HEK293 (cell line): ENCODE measurements at regions of chr20 and their contacts with region 1.

Region 1: DNA sequence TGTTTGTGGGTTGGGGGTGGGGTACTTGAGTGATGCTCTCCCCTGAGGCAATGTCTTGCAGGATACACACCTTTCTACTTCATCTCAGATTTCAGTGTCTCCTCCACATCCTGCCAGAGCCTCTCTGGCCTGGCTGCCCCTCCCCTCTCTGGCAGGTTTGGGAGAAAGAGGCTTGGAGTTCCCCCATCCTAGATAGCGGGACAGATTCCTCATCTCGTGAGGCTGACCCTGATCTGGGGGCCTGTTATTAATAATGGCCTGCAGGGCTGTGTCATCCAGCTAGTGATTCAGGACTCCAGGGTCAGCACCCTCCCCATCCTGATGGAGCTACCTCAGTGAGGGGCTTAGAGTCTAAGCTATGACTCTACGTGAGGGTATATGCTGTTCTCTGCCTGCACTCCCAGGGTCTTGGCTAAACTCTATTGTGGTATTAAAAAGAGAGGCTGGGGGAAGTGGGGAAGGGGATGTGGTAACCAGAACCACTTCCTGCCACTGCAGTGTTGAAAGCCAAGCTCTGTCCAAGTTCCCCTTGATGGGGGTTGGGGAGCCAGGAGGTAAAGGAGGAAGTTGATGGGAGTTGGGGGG is 3.7 kb upstream of the MMP9 start:
- H3K4me3 ChIP-seq: no peak overlapping the region
- H3K27ac ChIP-seq: no peak overlapping the region
- H3K4me1 ChIP-seq: no peaks in the 10 kb centered on the region
- CTCF ChIP-seq: no peak

Region 2: GRCh38 chr20:45987108-45987780 is 17.7 kb before region 1 on chr20:
- CTCF ChIA-PET with region 1: interaction called, 12 read pairs
- POLR2A ChIA-PET with region 1: interaction called, 7 read pairs
- H3K4me3 ChIP-seq: no peak overlapping the region
- H3K27ac ChIP-seq: no peak overlapping the region
- H3K4me1 ChIP-seq: no peaks in the 10 kb centered on the region
- CTCF ChIP-seq: peak; percentile 76